ENCODE measurements at regions of chr7 and their contacts with region 1.

Region 1: DNA sequence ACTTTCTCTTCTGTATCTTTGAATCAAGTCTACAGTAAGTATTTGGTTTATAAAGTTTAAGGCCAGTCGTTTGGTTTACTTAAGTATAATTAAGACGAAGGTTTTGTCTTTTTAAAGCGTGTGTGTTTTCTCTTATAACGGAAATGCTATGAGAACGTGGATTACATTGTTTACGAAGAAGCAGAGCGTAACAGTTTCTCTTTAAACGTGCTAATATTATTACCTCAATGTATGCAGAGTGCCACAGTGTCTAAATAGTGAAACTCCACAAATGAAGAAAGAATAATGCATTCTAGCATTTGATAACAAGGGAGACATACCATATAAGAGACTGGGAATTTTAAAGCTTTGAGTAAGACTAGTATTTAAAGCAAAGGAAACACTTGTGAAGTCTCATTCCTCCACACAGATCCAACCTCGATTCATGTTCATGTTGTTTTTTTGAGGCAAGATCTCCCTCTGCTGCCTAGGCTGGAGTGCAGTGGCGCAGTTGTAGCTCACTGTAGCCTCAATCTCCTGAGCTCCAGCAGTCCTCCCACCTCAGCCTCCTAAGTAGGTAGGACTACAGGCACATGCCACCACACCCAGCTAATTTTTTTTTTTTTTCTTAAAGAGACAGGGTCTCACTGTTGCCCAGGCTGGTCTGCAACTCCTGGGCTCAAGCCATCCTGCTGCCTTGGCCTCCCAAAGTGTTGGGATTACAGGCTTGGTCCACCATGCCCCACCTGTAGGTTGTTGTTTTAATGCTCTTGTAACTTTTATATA is 75.1 kb downstream of the ANKRD61 start:
- DNase-seq: peak; percentile 33
- ATAC-seq: peak; percentile 2; the same call in 1 of the 2 replicates
- H3K4me3 ChIP-seq: peak overlapping the region; percentile 81
- H3K27ac ChIP-seq: no peak overlapping the region
- H3K4me1 ChIP-seq: 0 out of 2 replicates have a peak, but pooled peaks cover 9% of the 10 kb centered on the region
- H3K27me3 ChIP-seq: no peaks in the 10 kb centered on the region
- CTCF ChIP-seq: peak; percentile 33; the same call in 1 of the 2 replicates

Region 2: DNA sequence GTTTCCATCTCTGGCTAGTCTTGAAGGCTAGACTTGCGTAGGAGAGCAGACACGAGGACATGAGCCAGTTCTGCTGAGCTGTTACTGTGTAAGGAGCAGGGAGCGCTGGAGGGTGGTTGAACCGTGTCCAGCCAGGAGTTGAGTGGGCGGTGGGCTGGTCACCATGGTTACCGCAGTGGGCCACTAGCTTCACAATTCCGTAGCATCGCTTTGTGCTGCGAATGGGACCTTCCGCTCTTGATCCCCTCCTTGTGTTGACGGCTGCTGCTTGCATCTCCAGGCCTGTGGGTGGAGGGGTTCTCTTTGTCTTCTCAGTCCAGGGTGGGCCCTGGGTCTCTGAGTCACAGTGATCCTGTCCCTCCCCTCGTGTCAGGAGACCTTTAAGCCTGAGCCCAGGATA is 275.1 kb before region 1 on chr7:
- CTCF ChIA-PET with region 1: no interaction called
- POLR2A ChIA-PET with region 1: no interaction called
- intact Hi-C with region 1: no loop called
- DNase-seq: no peak
- ATAC-seq: no peak
- H3K4me3 ChIP-seq: no peak overlapping the region
- H3K27ac ChIP-seq: no peak overlapping the region
- H3K4me1 ChIP-seq: no peaks in the 10 kb centered on the region
- H3K27me3 ChIP-seq: no peaks in the 10 kb centered on the region
- CTCF ChIP-seq: no peak

Region 3: GRCh38 chr7:6049780-6050179 is 56.5 kb before region 1 on chr7:
- CTCF ChIA-PET with region 1: interaction called, 11 read pairs
- POLR2A ChIA-PET with region 1: no interaction called
- intact Hi-C with region 1: no loop called
- DNase-seq: no peak
- ATAC-seq: no peak
- H3K4me3 ChIP-seq: no peak overlapping the region
- H3K27ac ChIP-seq: no peak overlapping the region
- H3K4me1 ChIP-seq: no peaks in the 10 kb centered on the region
- H3K27me3 ChIP-seq: no peaks in the 10 kb centered on the region
- CTCF ChIP-seq: no peak

Region 4: GRCh38 chr7:6256677-6257535 is 150.6 kb after region 1 on chr7:
- CTCF ChIA-PET with region 1: no interaction called
- POLR2A ChIA-PET with region 1: no interaction called
- intact Hi-C with region 1: no loop called
- DNase-seq: no peak
- ATAC-seq: no peak
- H3K4me3 ChIP-seq: no peak overlapping the region
- H3K27ac ChIP-seq: peak overlapping the region; percentile 41
- H3K4me1 ChIP-seq: peaks cover 13% of the 10 kb centered on the region
- H3K27me3 ChIP-seq: no peaks in the 10 kb centered on the region
- CTCF ChIP-seq: no peak

Measured in PC-3 (cell line).